A549 (cell line): ENCODE measurements at regions of chr9 and their contacts with region 1.

Region 1: DNA sequence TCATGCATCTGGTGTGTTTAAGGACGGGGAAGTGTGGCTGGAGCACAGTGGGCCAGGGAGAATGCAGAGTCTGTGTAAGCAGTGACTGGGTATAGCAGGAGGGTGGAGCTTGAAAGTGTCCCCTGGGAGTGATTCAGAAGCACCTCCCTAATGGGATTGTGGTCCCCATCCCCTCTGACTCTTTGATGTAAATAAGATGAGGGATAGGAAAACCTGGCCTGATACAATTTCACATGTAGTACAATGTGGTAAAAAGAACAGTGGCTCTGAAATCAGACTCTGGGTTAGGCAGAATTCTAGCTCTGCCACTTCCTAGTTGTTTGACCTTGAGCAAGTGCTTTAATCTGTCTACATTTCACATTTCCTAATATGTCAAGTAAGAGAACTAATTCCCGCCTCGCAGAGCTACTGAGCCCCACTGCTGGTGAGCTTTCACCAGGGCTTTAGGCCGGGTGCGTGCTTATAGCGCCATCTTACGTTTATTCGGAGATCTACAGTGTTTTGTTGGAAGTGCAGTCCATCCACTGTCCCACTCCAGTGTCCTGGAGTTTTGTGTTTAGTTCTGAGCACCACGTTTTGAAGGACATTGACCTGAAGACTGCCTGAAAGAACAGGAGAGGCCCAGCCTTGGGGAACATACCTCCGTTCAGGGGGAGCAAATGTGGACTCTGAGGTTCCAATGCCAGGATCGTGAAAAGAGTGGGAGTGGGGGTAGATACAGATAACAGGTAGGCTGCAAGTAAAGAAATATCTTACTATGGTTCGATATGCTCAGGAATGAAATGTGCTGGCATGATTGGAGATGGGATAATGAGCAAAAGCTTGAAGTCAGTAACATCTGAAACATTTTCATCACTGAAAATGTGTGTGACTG is 51.2 kb upstream of the TESK1 start:
- DNase-seq: peak; percentile 69 to 85
- ATAC-seq: peak; percentile 84 to 89
- H3K4me3 ChIP-seq: no peak overlapping the region; the same call in 2 of the 3 replicates
- H3K27ac ChIP-seq: peak overlapping the region; percentile 83 to 87
- H3K4me1 ChIP-seq: peaks cover 44% of the 10 kb centered on the region
- CTCF ChIP-seq: peak; percentile 98
- EP300 ChIP-seq: no peak
- POLR2A ChIP-seq: no peak
- RAD21 ChIP-seq: peak; percentile 98 to 99

Region 2: DNA sequence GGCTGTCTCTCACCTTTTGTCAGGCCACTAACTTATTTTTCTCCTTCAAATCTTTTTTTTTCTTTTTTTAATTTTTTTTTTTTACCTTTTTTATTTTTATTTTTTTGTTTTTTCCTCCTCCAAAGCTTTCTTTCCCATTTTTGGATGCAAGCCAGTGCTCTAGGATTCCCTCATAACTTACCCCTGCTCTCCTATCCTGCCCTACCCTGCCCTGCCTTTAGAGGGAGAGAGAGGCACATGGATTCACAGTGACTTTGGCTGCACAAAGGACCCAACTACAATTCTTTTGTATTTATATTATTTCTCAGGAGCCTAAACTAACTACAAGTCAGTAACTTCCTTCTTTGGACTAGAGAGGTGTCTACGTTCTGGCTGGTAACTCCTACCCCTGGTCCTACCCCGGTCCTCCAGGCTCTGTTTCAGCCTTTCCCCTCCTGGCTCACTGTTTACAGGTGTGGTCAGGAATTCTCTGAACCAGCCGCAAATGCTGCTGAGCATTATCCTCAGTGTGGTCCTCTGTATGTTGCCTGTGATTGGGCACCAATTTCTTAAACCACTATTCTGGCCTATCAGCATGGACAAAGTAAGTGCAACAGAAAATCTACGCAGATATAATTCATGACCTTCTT is 72.4 kb before region 1 on chr9:
- CTCF ChIA-PET with region 1: interaction called, 183 read pairs
- POLR2A ChIA-PET with region 1: interaction called, 3 read pairs
- DNase-seq: peak; percentile 74 to 75
- ATAC-seq: peak; percentile 73 to 80; a peak in 4 of 6 replicates
- H3K4me3 ChIP-seq: no peak overlapping the region
- H3K27ac ChIP-seq: peak overlapping the region; percentile 21 to 68
- H3K4me1 ChIP-seq: peaks cover 31% of the 10 kb centered on the region
- CTCF ChIP-seq: peak; percentile 77
- EP300 ChIP-seq: no peak
- POLR2A ChIP-seq: no peak
- RAD21 ChIP-seq: peak; percentile 88 to 95

Region 3: DNA sequence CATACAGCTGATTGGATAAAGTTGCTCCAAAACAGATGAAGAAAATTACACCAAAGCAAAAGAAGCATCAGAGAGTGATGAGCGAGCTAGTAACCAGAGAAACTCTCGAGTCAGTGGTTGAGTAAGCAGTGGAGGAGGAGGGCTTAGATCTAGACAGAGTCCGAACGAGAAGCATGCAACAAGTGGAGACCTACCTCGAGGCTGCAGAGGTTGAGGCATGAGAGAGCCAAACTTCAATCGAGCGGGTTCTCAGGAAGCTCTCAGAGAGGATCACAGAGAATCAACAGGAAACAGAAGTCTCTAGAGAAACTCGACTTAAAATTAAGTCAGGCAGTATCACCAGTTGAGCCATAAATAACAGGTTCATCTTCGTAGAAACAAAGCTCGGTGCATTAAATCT is 57.9 kb before region 1 on chr9:
- CTCF ChIA-PET with region 1: interaction called, 87 read pairs
- POLR2A ChIA-PET with region 1: interaction called, 25 read pairs
- DNase-seq: no peak
- ATAC-seq: no peak
- H3K4me3 ChIP-seq: no peak overlapping the region
- H3K27ac ChIP-seq: peak overlapping the region in 1 of 2 experiments; percentile 34; a peak in 1 of 6 replicates
- H3K4me1 ChIP-seq: peaks cover 11% of the 10 kb centered on the region; the same call in 2 of the 3 replicates
- CTCF ChIP-seq: no peak
- EP300 ChIP-seq: no peak
- POLR2A ChIP-seq: no peak
- RAD21 ChIP-seq: no peak

Region 4: DNA sequence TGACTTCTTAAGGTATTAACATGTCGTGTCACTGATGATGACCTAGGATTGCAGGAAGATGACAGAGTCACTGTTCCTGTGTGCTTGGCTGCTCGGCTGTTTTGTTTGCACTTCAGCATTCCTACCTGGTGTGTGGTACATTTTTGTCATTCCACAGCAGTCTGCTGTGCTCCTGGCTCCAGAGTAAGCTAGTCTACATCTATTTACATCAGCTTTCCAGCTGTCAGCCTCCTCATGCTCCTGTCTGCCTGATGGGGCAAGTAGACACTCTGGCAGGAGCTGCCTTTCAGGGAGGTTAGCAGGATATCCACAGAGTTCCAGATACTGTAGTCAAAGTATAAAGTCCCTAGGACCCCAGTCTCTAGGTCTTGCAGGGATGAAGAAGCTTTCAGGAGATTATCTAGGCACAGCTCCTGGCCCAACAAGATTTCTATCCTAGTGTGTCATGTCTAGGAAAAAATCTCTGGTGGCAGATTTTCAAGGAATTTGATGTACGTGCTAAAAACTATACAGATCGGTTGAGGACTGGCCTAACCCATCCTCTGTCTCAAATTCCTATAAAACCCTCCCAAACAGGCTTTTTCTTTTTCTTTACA is 35.6 kb before region 1 on chr9:
- CTCF ChIA-PET with region 1: interaction called, 146 read pairs
- POLR2A ChIA-PET with region 1: interaction called, 12 read pairs
- DNase-seq: peak; percentile 95 to 98
- ATAC-seq: peak; percentile 91
- H3K4me3 ChIP-seq: no peak overlapping the region
- H3K27ac ChIP-seq: peak overlapping the region; percentile 95 to 96
- H3K4me1 ChIP-seq: peaks cover 96% of the 10 kb centered on the region
- CTCF ChIP-seq: no peak
- EP300 ChIP-seq: peak; percentile 99
- POLR2A ChIP-seq: no peak
- RAD21 ChIP-seq: peak; percentile 35 to 69

Region 5: GRCh38 chr9:35538361-35539234 is 15.3 kb before region 1 on chr9:
- CTCF ChIA-PET with region 1: interaction called, 122 read pairs
- POLR2A ChIA-PET with region 1: no interaction called
- DNase-seq: no peak
- ATAC-seq: peak in 1 of 2 experiments; percentile 27; a peak in 2 of 6 replicates
- H3K4me3 ChIP-seq: no peak overlapping the region
- H3K27ac ChIP-seq: peak overlapping the region; percentile 59 to 78
- H3K4me1 ChIP-seq: peaks cover 63% of the 10 kb centered on the region
- CTCF ChIP-seq: no peak
- EP300 ChIP-seq: no peak
- POLR2A ChIP-seq: no peak
- RAD21 ChIP-seq: no peak

Region 6: DNA sequence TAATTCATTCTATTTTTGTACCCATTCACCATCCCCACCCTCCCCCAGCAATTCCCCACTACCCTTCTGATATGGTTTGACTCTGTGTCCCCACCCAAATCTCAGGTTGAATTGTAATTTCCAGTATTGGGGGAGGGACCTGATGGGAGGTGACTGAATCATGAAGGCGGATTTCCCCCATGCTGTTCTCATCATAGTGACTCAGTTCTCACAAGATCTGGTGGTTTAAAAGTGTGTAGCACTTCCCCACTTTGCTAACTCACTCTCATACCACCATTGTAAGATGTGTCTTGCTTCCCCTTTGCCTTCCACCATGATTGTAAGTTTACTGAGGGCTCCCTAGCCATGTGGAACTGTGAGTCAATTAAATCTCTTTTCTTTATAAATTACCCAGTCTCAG is 25.2 kb after region 1 on chr9:
- CTCF ChIA-PET with region 1: interaction called, 10 read pairs
- POLR2A ChIA-PET with region 1: no interaction called
- DNase-seq: no peak
- ATAC-seq: no peak
- H3K4me3 ChIP-seq: no peak overlapping the region
- H3K27ac ChIP-seq: no peak overlapping the region
- H3K4me1 ChIP-seq: no peaks in the 10 kb centered on the region
- CTCF ChIP-seq: no peak
- EP300 ChIP-seq: no peak
- POLR2A ChIP-seq: no peak
- RAD21 ChIP-seq: no peak